CD8-positive, alpha-beta T cell (primary cell): ENCODE measurements at regions of chr2 and their contacts with region 1.

Region 1: GRCh38 chr2:101520246-101520645 is 45.3 kb upstream of the RFX8 start:
- DNase-seq: no peak
- ATAC-seq: no peak
- H3K4me3 ChIP-seq: no peak overlapping the region
- H3K4me3 Mint-ChIP-seq: no peak overlapping the region
- H3K27ac ChIP-seq: no peak overlapping the region
- H3K27ac Mint-ChIP-seq: no peak overlapping the region
- H3K4me1 ChIP-seq: peaks cover 12% of the 10 kb centered on the region
- H3K4me1 Mint-ChIP-seq: peaks cover 23% of the 10 kb centered on the region
- H3K27me3 ChIP-seq: no peaks in the 10 kb centered on the region
- H3K27me3 Mint-ChIP-seq: no peaks in the 10 kb centered on the region
- CTCF ChIP-seq: no peak

Region 2: DNA sequence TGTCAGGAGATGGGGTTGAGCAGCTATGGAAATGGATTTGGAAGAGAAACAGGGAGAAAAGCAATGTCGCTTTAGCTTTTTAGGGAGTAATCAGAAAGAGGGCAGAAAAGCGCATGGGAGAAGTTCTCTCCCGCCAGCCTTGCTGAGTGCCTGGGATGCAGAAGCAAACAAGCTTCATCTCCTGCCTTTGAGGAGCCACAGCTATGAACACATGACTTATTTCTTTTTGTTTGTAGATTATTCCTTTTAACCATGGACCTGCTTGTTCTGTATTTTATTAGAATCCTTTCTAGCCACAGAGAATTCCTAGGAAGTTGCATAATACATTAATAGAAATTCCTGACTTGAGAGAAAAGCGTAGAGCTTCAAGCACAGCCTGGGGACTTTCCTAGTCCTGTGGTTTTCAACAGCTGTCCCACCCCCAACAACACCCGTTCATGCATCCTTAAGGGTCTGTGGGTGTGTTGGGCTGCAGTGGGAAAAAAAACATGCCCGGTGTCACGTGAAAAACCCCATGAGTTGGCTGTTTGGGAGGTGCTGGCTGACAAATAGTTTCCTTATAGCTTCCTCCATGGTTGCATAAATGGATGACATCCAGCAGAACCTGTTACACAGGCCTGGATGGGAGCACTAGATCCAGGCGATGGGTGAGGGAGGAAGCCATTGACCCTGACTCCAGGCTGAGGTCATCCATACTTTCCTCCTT is 967.7 kb after region 1 on chr2:
- CTCF ChIA-PET with region 1: no interaction called
- POLR2A ChIA-PET with region 1: no interaction called
- intact Hi-C with region 1: loop called in 1 of 2 experiments (anchors 10 kb)
- DNase-seq: no peak
- ATAC-seq: no peak
- H3K4me3 ChIP-seq: no peak overlapping the region
- H3K4me3 Mint-ChIP-seq: no peak overlapping the region
- H3K27ac ChIP-seq: no peak overlapping the region
- H3K27ac Mint-ChIP-seq: no peak overlapping the region
- H3K4me1 ChIP-seq: no peaks in the 10 kb centered on the region
- H3K4me1 Mint-ChIP-seq: peaks cover 9% of the 10 kb centered on the region
- H3K27me3 ChIP-seq: no peaks in the 10 kb centered on the region
- H3K27me3 Mint-ChIP-seq: peaks cover 10% of the 10 kb centered on the region
- CTCF ChIP-seq: no peak